Ovary (tissue), 10 donors: ENCODE measurements at regions of chr3 and their contacts with region 1.

Region 1: GRCh38 chr3:14537590-14538447 is 2.3 kb downstream of the GRIP2 start:
- DNase-seq: no peak
- H3K4me3 ChIP-seq: no peak overlapping the region
- H3K27ac ChIP-seq: no peak overlapping the region
- H3K4me1 ChIP-seq: peaks cover 11% of the 10 kb centered on the region
- H3K27me3 ChIP-seq: no peaks in the 10 kb centered on the region
- CTCF ChIP-seq: no peak
- EP300 ChIP-seq: no peak
- POLR2A ChIP-seq: no peak

Region 2: DNA sequence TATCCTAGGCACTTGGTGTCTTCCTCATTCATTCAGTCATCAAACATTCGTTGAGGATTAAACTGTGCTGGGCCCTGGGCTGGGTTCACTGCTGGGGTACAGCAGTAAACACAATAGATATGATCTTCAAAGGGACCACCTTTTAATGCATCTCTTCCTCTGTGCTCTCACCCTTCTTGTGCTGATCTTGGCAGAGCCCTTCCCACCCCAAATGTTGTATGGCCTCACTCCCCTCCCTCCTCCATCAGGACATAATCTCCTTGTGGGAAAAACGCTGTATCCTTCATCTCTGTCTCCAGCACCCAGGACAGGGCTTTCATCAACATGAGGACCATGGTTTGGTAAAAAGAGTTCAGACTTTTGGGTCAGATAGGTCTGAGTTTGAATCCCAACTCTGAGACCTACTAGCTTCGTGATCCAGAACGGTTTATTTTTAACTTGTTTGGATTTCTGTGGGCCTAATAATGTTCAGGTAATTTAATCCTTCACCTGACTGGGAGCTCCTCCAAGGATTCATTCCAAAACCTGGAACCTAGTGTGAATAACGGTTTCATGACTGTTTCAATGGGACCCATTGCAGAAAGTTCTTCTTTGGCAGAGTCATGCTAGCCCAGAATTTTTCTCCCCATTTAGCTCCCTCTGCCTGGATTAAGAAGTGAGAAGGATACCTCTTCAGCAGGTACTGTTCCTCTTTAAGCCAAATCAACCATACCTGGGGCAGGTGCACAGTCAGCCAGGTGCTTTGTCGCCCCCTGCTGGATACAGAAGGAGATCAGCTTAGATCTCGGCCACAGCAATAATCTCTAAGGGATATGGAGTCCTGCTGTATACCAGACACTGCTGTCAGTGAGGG is 652.7 kb before region 1 on chr3:
- intact Hi-C with region 1: loop called in 1 of 4 experiments (anchors 5 kb)
- DNase-seq: peak in 1 of 5 donors; percentile 7
- H3K4me3 ChIP-seq: no peak overlapping the region
- H3K27ac ChIP-seq: no peak overlapping the region
- H3K4me1 ChIP-seq: no peaks in the 10 kb centered on the region
- H3K27me3 ChIP-seq: no peaks in the 10 kb centered on the region
- CTCF ChIP-seq: no peak
- EP300 ChIP-seq: no peak
- POLR2A ChIP-seq: no peak

Region 3: DNA sequence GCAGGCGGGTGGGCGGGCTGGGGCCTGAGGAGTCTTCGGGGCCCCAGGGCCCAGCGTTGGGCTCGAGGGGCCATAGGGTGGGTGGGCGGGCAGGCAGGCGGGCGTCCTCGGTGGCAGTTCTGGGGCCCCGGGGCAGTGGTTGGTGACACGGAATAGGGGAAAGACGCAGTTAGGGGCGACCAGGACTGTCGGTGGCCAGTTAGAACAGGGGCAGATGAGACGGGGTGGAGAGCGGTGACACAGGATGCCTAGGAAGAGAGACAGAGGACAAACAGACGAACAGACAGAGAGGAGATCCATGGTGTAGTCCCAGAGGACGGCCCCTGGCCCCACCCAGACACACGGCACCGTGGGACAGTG is 34.1 kb before region 1 on chr3:
- intact Hi-C with region 1: loop called in 1 of 4 experiments (anchors 5 kb)
- DNase-seq: peak in 2 of 5 donors; percentile 14 to 21
- H3K4me3 ChIP-seq: no peak overlapping the region
- H3K27ac ChIP-seq: no peak overlapping the region
- H3K4me1 ChIP-seq: no peaks in the 10 kb centered on the region
- H3K27me3 ChIP-seq: no peaks in the 10 kb centered on the region
- CTCF ChIP-seq: no peak
- EP300 ChIP-seq: no peak
- POLR2A ChIP-seq: no peak